BJ (cell line): ENCODE measurements at regions of chr1 and their contacts with region 1.

Region 1: DNA sequence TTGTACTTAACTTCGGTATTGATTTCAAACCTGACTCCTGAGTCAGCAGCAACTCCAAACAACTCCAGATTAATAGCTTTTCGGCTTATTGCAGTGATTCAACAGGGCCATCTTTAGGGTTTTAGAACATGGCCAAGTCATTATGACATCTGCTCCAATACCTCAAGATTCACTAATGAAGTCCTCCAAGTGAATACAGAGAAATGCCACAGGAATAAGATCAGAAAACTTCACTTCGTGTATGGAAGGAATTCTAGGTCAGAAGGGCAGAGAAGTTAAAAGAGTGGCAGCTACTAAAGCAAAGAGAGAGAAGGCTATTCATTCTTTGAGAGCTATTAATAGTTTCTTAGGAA is 7.6 kb upstream of the C1orf116 start:
- DNase-seq: peak; percentile 69
- H3K4me3 ChIP-seq: no peak overlapping the region
- H3K27me3 ChIP-seq: no peaks in the 10 kb centered on the region
- CTCF ChIP-seq: no peak

Region 2: GRCh38 chr1:207172885-207173284 is 132.7 kb after region 1 on chr1:
- CTCF ChIA-PET with region 1: no interaction called
- POLR2A ChIA-PET with region 1: no interaction called
- DNase-seq: no peak
- H3K4me3 ChIP-seq: no peak overlapping the region
- H3K27me3 ChIP-seq: no peaks in the 10 kb centered on the region
- CTCF ChIP-seq: no peak

Region 3: DNA sequence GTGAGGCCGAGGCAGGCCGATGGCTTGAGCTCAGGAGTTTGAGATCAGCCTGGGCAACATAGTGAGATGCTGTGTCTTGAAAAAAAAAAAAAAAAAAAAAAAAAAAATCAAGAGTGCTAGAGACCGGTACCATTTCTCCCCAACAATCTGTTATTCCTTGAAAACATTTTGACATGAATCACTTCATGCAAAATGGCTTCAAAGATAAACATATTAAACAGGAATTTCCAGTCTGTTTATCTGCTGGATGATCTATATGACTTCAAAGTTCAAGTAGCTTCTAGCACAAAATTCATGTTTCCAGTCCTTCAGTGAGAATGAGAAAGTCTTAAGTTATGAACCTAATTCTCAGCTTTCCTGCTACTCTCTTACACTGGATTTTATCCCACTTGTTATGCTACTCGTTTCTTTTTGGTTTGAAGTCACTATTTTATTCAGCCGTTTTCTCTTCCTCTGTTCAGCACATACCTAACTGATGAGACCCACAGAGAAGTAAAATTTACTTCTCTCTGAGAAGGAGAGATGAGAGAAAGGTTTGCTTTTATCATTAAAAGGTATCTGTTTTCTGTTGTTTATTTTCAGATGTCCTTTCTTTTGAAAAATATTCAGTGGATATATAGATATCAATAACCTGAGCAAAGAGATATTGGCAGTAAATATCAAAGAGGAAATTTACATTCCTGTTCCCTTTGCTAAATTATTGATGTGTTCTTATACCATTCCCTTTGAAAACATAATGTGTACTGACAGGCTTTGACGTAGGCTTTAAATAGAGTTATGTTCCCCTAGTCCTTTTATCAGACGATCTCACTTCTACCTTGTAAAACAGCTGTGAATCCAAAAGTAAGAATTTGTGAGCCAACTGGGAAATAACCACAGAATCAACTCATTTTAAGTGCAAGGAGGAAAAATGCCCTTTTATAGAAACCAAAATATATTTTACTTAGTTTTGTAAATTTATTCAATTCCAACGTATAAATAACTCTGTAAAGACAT is 749.9 kb after region 1 on chr1:
- CTCF ChIA-PET with region 1: no interaction called
- POLR2A ChIA-PET with region 1: interaction called, 21 read pairs
- DNase-seq: no peak
- H3K4me3 ChIP-seq: no peak overlapping the region
- H3K27me3 ChIP-seq: no peaks in the 10 kb centered on the region
- CTCF ChIP-seq: no peak